ENCODE measurements at regions of chr10 and their contacts with region 1.

Region 1: DNA sequence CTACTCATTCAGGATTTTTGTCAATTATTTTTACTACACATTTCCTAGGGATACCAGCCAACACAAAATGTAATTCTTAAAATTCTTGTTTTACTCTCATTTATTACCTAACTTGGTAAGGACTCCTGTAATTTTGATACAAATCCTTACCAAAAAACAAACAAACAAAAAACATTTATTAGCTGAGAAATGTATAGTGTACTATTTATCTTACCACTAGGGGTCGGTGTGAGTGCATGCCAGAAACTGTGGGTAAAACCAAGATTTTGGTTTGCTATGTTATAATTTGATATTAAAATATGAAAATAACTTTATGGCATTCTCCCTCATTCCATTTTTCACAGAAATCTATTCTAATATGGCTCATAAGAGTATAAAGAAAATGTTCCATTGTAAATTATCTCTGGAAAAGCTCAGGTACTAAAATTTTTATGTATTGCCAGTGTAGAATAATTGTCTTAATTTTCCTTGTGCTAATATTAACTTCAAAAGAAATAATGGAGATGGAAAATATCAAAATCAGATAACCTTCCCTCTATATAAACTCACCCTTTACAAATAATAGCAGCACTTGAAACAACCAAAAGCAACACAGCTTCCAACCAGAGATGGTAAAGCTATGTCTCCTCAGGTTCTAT is 290.8 kb upstream of the PCDH15 start:
- DNase-seq: no peak
- ATAC-seq: no peak
- H3K4me3 ChIP-seq: no peak overlapping the region
- H3K27ac ChIP-seq: no peak overlapping the region
- H3K4me1 ChIP-seq: no peaks in the 10 kb centered on the region
- H3K27me3 ChIP-seq: no peaks in the 10 kb centered on the region
- CTCF ChIP-seq: peak; percentile 65 to 87 (median 78)
- POLR2A ChIP-seq: no peak

Region 2: DNA sequence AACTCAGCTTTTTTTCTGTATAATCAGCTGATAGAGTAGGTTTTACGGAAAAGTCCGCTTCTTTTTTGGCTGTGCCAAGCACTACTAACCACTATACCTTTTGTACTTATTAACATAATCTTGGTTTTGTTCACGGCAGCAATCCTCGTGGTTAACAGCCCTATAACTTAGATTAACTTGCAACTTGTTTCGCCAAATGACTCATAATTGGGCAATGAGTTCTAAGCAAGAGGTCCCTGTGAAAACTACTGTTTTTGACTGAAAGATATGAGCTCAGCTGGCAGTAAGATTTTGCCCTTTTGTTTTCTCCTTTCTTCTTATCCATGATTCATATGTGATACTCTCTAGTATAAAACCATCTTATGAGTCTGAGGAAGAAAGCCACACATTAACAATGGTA is 54.2 kb after region 1 on chr10:
- intact Hi-C with region 1: no loop called
- DNase-seq: no peak
- ATAC-seq: no peak
- H3K4me3 ChIP-seq: no peak overlapping the region
- H3K27ac ChIP-seq: no peak overlapping the region
- H3K4me1 ChIP-seq: no peaks in the 10 kb centered on the region
- H3K27me3 ChIP-seq: no peaks in the 10 kb centered on the region
- CTCF ChIP-seq: no peak
- POLR2A ChIP-seq: no peak

Region 3: DNA sequence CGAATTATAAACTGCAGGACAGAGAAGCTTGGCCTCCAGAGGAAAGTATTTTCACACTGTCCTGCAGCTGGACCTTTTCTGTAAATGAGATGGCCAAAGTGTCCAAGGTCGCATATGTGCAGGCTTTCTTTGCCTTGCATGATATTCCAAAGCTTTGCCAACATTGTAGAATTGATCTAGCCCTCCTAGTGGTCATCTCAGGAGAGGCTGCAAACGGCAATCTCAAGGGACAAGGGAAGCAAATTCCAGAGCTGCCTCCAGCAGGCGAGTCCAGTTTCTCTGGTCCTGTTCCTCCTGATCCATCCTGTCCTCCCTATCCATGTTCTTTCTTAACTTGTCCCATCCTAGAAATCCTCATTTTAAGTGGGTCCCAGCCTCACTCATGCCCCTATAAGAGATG is 82.6 kb after region 1 on chr10:
- intact Hi-C with region 1: no loop called
- DNase-seq: no peak
- ATAC-seq: no peak
- H3K4me3 ChIP-seq: no peak overlapping the region
- H3K27ac ChIP-seq: no peak overlapping the region
- H3K4me1 ChIP-seq: no peaks in the 10 kb centered on the region
- H3K27me3 ChIP-seq: no peaks in the 10 kb centered on the region
- CTCF ChIP-seq: no peak
- POLR2A ChIP-seq: no peak

Region 4: DNA sequence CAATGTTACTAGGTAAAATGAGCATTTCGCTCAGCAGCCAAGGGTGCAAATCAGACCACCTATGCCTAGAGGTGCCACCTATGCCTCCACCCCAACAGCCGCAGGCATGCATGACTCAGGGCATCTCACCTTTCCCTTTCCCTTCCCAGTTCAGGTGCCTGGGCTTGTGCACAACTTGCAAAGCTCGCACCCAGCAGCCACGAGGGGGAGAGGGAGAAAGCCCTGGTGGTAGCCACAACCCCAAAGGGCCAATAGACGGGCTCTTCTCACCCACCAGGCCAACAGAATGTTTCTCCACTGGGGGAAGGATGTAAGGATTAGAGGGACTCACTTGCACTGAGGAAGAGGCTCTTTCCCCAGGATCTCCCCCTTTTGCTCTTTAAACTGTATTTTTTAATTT is 171.5 kb after region 1 on chr10:
- intact Hi-C with region 1: loop called in 4 of 10 experiments (anchors 2 to 10 kb)
- DNase-seq: no peak
- ATAC-seq: no peak
- H3K4me3 ChIP-seq: no peak overlapping the region
- H3K27ac ChIP-seq: no peak overlapping the region
- H3K4me1 ChIP-seq: no peaks in the 10 kb centered on the region
- H3K27me3 ChIP-seq: no peaks in the 10 kb centered on the region
- CTCF ChIP-seq: no peak
- POLR2A ChIP-seq: no peak

Region 5: DNA sequence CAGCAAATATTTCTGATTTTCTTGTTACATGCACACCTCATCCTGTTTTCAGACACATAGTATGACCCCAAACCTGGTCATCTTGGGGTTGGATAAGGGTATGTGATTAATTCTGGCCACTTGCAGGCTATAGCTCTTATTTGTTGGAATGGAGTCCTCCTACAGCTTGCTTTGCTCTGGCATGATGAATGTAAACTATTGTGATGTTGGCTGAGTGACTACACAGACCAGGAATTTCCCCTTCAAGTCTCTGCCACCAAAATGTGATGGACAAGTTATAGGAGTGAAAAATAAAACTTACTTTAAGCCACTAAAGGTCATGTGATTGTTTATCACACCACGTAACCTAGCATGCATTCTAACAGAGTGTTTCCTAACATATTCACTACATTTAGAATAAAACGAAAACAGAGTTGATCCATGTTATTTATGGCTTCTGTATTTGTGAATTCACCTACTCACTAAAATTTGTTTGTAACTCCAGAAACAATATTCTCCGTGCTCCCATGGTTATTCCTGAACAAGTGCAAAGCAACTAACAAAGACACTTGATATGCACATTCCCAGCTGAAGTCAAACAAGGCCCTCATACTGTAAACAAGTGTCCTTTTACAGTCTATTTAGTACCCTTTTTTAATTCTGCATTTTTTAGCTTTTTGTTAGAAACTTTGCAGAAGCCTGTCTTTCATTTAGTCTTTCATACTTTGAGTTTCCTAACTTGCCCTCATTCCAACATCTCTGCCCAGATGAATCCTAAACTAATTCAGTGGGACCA is 308.5 kb after region 1 on chr10:
- intact Hi-C with region 1: loop called in 2 of 10 experiments (anchors 10 kb)
- DNase-seq: no peak
- ATAC-seq: no peak
- H3K4me3 ChIP-seq: no peak overlapping the region
- H3K27ac ChIP-seq: no peak overlapping the region
- H3K4me1 ChIP-seq: no peaks in the 10 kb centered on the region
- H3K27me3 ChIP-seq: no peaks in the 10 kb centered on the region
- CTCF ChIP-seq: no peak
- POLR2A ChIP-seq: no peak

Region 6: DNA sequence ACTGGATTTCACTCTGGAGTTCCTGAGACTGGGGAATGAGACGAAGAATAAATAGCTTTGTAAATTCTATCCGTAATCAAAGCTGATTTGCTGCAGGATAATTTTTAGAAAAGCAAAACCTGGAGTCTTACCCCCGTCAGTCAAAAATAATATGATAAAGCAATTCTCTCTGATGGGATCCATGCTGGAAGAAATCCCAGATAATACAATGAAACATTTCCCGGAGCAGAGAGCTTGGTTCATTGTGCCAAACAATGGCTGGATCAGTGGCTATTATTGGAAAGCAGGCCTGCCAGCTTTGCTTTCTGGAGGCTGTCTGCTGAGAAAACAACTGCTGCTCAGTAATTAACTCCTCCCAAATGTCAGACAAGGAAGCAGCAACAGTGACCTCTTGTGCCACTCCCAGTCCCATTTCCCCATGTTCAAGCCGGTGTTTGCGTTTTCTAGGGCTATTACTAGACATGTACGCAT is 318.6 kb after region 1 on chr10:
- intact Hi-C with region 1: loop called in 4 of 10 experiments (anchors 5 to 10 kb)
- DNase-seq: peak; percentile 42 to 75 (median 65)
- ATAC-seq: peak; percentile 99 to 100 (median 100)
- H3K4me3 ChIP-seq: peak overlapping the region in 7 of 12 donors; percentile 1 to 24 (median 20)
- H3K27ac ChIP-seq: peak overlapping the region; percentile 24 to 65 (median 54)
- H3K4me1 ChIP-seq: peaks cover 0 to 13% (median 6%) of the 10 kb centered on the region in 12 donors
- H3K27me3 ChIP-seq: no peaks in the 10 kb centered on the region
- CTCF ChIP-seq: peak in 10 of 12 donors; percentile 7 to 67 (median 48)
- POLR2A ChIP-seq: no peak

Region 7: GRCh38 chr10:55495555-55495954 is 403.7 kb after region 1 on chr10:
- intact Hi-C with region 1: loop called in 9 of 10 experiments (anchors 2 to 10 kb)
- DNase-seq: no peak
- ATAC-seq: no peak
- H3K4me3 ChIP-seq: no peak overlapping the region
- H3K27ac ChIP-seq: no peak overlapping the region
- H3K4me1 ChIP-seq: no peaks in the 10 kb centered on the region
- H3K27me3 ChIP-seq: no peaks in the 10 kb centered on the region
- CTCF ChIP-seq: no peak
- POLR2A ChIP-seq: no peak

Region 8: GRCh38 chr10:55500932-55501559 is 409.2 kb after region 1 on chr10:
- intact Hi-C with region 1: loop called in 9 of 10 experiments (anchors 2 to 10 kb)
- DNase-seq: peak in 1 of 5 donors; percentile 17
- ATAC-seq: no peak
- H3K4me3 ChIP-seq: no peak overlapping the region
- H3K27ac ChIP-seq: no peak overlapping the region
- H3K4me1 ChIP-seq: no peaks in the 10 kb centered on the region
- H3K27me3 ChIP-seq: no peaks in the 10 kb centered on the region
- CTCF ChIP-seq: peak; percentile 36 to 70 (median 57)
- POLR2A ChIP-seq: no peak

Region 9: DNA sequence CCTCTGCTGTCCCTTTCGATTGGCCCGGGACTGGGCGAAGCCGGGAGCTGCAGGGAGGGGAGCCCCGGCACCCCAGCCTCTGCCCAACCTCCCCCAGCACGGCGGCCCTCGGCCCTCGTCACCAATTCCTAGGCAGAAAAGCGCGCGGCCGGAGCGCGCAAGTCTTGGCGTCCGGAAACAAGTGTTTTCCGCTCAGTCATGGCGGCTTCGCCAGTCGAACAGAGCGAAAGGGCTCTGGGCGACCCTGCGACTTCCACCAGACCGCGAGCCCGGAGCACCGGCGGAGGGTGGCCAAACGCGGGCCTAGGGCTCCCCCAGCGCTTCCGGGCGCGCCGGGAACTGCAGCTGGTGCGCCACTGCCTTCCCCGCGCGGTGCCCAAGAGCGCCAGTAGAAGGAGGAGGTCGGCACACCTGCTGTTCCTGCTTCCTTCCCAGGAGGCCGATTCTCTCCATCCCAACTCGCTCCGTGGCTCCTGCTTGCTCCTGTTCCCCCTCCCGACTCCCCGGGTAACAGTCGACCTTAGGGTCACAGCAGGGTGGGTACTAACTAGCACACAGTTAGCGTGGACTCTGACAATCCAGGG is 539.4 kb after region 1 on chr10:
- intact Hi-C with region 1: loop called in 1 of 10 experiments (anchors 5 kb)
- DNase-seq: peak; percentile 29 to 73 (median 39)
- ATAC-seq: peak; percentile 80 to 97 (median 93)
- H3K4me3 ChIP-seq: peak overlapping the region; percentile 38 to 62 (median 54)
- H3K27ac ChIP-seq: no peak overlapping the region
- H3K4me1 ChIP-seq: peaks cover 0 to 31% (median 7%) of the 10 kb centered on the region in 12 donors
- H3K27me3 ChIP-seq: peaks cover 6 to 48% (median 26%) of the 10 kb centered on the region in 9 donors
- CTCF ChIP-seq: peak; percentile 41 to 75 (median 60)
- POLR2A ChIP-seq: no peak

Region 10: DNA sequence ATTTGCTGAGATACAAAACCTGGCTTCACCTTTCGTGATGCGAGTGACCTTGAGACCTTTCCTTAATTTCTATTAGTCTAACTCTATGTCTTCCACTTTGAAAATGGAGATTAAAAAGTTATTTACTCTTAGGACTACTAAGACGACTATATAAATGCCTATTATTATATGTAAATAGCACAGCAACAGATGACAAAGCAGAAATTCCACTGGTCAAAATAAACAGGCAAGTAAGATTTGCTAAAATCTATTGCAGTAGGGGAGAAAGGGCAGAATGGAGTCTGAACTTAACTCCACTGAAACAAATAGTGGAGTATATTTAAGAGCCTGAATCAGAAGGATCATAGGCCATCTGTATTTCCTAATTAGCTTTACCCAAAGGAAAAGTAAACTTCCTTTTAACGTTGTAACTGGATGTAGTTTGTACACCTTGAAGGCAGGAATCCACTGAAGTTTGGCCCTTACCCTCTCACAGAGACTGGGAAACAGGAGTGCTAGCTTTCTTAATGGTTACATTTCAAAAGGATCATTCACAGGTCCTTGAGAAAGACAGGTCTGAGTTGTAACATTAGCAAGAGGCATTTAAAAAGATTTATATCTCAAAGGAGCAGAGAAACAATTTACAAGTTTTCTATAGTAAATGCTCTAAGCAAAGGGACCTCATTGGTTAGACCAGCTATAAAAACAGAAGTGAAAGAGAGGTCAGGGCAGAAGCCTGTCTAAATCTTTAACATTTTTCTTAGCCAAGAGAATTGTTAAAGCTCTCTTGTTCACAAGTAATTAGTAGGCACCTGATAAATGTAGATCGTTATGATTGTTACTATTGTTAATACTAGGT is 936.7 kb after region 1 on chr10:
- intact Hi-C with region 1: no loop called
- DNase-seq: no peak
- ATAC-seq: no peak
- H3K4me3 ChIP-seq: no peak overlapping the region
- H3K27ac ChIP-seq: no peak overlapping the region
- H3K4me1 ChIP-seq: no peaks in the 10 kb centered on the region
- H3K27me3 ChIP-seq: no peaks in the 10 kb centered on the region
- CTCF ChIP-seq: no peak
- POLR2A ChIP-seq: no peak